Kidney (tissue), 22 donors: ENCODE measurements at regions of chr18 and their contacts with region 1.

Region 1: DNA sequence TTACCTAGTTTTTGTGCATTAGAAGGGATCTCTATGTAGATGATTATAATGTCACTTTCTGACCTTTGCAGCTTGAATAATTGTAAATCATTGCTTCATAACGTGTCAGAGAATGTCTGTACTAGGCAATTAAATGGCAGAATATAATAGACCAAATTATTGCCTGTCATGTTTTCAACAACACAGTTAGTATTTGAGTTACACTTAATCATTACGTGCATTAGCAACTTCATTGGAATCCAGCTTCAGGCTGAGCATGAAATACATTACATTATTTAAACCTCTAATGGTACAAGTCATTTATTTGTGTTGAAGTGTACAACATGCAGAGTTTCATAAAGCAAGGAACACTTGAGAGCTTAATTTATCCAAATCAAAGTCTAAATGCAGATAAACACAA is 48.0 kb downstream of the ZNF407 start:
- DNase-seq: no peak
- H3K4me3 ChIP-seq: no peak overlapping the region
- H3K27ac ChIP-seq: no peak overlapping the region
- H3K4me1 ChIP-seq: no peaks in the 10 kb centered on the region
- H3K27me3 ChIP-seq: no peaks in the 10 kb centered on the region
- CTCF ChIP-seq: no peak

Region 2: GRCh38 chr18:75489493-75490190 is 844.0 kb after region 1 on chr18:
- intact Hi-C with region 1: loop called (anchors 10 kb)
- DNase-seq: no peak
- H3K4me3 ChIP-seq: no peak overlapping the region
- H3K27ac ChIP-seq: no peak overlapping the region
- H3K4me1 ChIP-seq: no peaks in the 10 kb centered on the region
- H3K27me3 ChIP-seq: no peaks in the 10 kb centered on the region
- CTCF ChIP-seq: no peak